Natural killer cell (primary cell): ENCODE measurements at regions of chr21 and their contacts with region 1.

Region 1: GRCh38 chr21:15815285-15815684 is 85.5 kb downstream of the USP25 start:
- DNase-seq: no peak
- ATAC-seq: no peak
- H3K4me3 ChIP-seq: no peak overlapping the region
- H3K4me3 Mint-ChIP-seq: no peak overlapping the region
- H3K27ac ChIP-seq: no peak overlapping the region
- H3K27ac Mint-ChIP-seq: peak overlapping the region; percentile 2 to 4
- H3K4me1 ChIP-seq: no peaks in the 10 kb centered on the region
- H3K4me1 Mint-ChIP-seq: peaks cover 13 to 35% of the 10 kb centered on the region in 2 donors
- H3K27me3 ChIP-seq: no peaks in the 10 kb centered on the region
- H3K27me3 Mint-ChIP-seq: no peaks in the 10 kb centered on the region
- CTCF ChIP-seq: no peak

Region 2: GRCh38 chr21:15688809-15689208 is 126.5 kb before region 1 on chr21:
- intact Hi-C with region 1: loop called (anchors 5 kb)
- DNase-seq: peak in 1 of 2 donors; percentile 40
- ATAC-seq: peak; percentile 50 to 70 (median 59)
- H3K4me3 ChIP-seq: no peak overlapping the region
- H3K4me3 Mint-ChIP-seq: peak overlapping the region; percentile 25
- H3K27ac ChIP-seq: no peak overlapping the region
- H3K27ac Mint-ChIP-seq: no peak overlapping the region
- H3K4me1 ChIP-seq: no peaks in the 10 kb centered on the region
- H3K4me1 Mint-ChIP-seq: peaks cover 9 to 16% of the 10 kb centered on the region in 2 donors
- H3K27me3 ChIP-seq: no peaks in the 10 kb centered on the region
- H3K27me3 Mint-ChIP-seq: peaks cover 31 to 38% of the 10 kb centered on the region in 2 donors
- CTCF ChIP-seq: no peak